CD8-positive, alpha-beta T cell (primary cell): ENCODE measurements at regions of chr1 and their contacts with region 1.

Region 1: DNA sequence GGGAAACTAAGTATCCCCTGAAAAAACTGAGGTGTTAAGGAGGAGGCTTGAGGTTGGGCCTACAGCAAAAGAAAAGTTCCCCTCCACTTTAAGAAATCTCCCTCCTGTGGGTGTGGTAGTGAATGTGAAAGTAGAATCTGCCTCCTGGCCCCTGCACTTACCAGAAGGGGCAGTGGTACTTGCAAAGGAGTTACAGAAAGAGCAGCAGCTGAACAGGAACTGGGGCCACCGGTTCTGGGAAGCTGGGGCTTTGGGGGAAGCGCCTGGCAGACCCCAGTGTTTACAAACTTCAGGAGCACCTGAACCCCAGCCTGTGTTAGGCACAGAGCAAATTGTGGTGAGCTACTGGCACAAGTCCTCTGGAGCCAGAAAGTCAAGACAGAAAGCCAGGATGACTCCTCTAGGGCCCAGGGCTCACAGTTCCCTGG is 250.2 kb upstream of the FGGY start:
- DNase-seq: peak in 8 of 9 experiments; percentile 7 to 81 (median 40)
- ATAC-seq: peak; percentile 84
- H3K4me3 ChIP-seq: no peak overlapping the region
- H3K4me3 Mint-ChIP-seq: peak overlapping the region; percentile 38
- H3K27ac ChIP-seq: peak overlapping the region in 1 of 2 experiments; percentile 57
- H3K27ac Mint-ChIP-seq: peak overlapping the region; percentile 73
- H3K4me1 ChIP-seq: peaks cover 38% of the 10 kb centered on the region
- H3K4me1 Mint-ChIP-seq: peaks cover 48% of the 10 kb centered on the region
- H3K27me3 ChIP-seq: no peaks in the 10 kb centered on the region
- H3K27me3 Mint-ChIP-seq: no peaks in the 10 kb centered on the region
- CTCF ChIP-seq: peak; percentile 24

Region 2: GRCh38 chr1:58824753-58825389 is 221.9 kb before region 1 on chr1:
- CTCF ChIA-PET with region 1: no interaction called
- POLR2A ChIA-PET with region 1: no interaction called
- intact Hi-C with region 1: no loop called
- DNase-seq: no peak
- ATAC-seq: no peak
- H3K4me3 ChIP-seq: no peak overlapping the region
- H3K4me3 Mint-ChIP-seq: no peak overlapping the region
- H3K27ac ChIP-seq: no peak overlapping the region
- H3K27ac Mint-ChIP-seq: no peak overlapping the region
- H3K4me1 ChIP-seq: no peaks in the 10 kb centered on the region
- H3K4me1 Mint-ChIP-seq: no peaks in the 10 kb centered on the region
- H3K27me3 ChIP-seq: no peaks in the 10 kb centered on the region
- H3K27me3 Mint-ChIP-seq: no peaks in the 10 kb centered on the region
- CTCF ChIP-seq: no peak

Region 3: DNA sequence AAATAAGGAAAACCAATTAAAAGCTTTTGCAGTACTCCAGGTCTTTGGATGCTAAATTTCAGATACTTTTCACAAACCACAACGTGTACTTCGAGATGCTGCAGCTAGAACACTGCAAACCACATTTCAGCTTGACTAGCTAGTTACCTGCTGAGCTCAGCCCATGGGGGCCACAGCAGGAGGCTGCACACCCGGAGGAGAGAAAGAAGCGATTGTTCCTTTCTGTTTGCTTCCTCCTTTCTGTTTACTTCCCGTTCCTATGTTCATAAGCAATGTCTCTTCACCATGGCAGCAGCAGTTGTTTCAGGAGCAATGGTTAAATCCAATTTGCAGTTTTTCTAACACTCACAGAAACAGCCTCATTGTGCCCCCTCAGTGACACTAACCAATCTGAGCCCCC is 24.5 kb after region 1 on chr1:
- CTCF ChIA-PET with region 1: interaction called, 12 read pairs
- POLR2A ChIA-PET with region 1: no interaction called
- intact Hi-C with region 1: no loop called
- DNase-seq: peak in 5 of 9 experiments; percentile 18 to 61 (median 27)
- ATAC-seq: peak; percentile 70
- H3K4me3 ChIP-seq: no peak overlapping the region
- H3K4me3 Mint-ChIP-seq: peak overlapping the region; percentile 68
- H3K27ac ChIP-seq: peak overlapping the region in 1 of 2 experiments; percentile 40
- H3K27ac Mint-ChIP-seq: peak overlapping the region; percentile 92
- H3K4me1 ChIP-seq: peaks cover 27% of the 10 kb centered on the region
- H3K4me1 Mint-ChIP-seq: peaks cover 28% of the 10 kb centered on the region
- H3K27me3 ChIP-seq: no peaks in the 10 kb centered on the region
- H3K27me3 Mint-ChIP-seq: no peaks in the 10 kb centered on the region
- CTCF ChIP-seq: no peak